Vagina (tissue), 2 donors: ENCODE measurements at regions of chr10 and their contacts with region 1.

Region 1: DNA sequence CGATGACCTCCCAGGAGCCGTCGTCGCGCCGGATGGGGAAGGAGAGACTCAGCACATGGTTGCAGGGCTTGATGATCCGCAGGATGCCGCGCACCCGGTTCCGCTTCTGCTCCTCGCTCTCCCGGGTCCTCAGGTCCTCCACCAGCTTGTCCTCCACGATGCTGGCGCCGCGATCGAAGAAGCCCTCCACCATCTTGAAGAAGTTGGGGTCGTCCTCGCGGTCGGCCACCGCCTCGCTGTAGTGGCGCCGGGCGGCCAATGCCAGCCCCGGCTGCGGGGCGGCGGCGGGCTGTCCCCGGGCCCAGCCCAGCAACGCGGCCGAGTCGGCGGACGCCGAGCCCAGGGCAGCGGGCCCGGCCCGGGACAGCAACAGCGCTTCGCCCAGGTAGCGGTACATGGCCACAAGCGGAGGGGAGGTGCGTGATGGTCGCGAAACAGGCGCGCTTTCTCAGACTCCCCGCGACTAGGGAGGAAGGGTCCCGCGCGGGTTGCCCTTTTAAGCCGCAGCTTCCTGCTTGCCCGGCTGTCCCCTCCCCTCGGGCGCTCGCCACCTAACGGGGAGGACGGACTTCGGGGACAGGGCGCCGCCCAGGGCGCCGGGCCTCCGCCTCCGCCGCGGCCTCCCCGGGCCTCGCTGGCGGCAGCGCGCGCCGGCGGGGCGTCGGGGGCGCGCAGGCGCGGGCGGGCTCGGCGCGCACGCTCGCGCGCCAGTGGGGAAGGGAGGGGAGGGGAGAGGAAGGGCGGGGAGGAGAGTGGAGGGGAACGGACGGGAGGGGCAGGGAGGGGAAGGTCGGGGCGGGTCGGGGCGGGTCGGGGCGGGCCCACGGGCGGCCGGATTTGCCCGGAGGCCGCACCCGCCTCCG is at the starts of genes GLUD1 and SHLD2:
- DNase-seq: peak in 1 of 2 donors; percentile 90
- H3K4me3 ChIP-seq: peak within 1 kb of the TSS; percentile 85 to 93
- H3K27ac ChIP-seq: peak within 1 kb of the TSS; percentile 98
- H3K4me1 ChIP-seq: peaks cover 41% of the 10 kb centered on the region
- H3K27me3 ChIP-seq: no peaks in the 10 kb centered on the region
- CTCF ChIP-seq: peak in 1 of 3 experiments; percentile 6
- POLR2A ChIP-seq: peak in 1 of 2 donors; percentile 86
- total RNA-seq, gene GLUD1: 133 TPM
- total RNA-seq, gene SHLD2: 27.5 TPM

Region 2: DNA sequence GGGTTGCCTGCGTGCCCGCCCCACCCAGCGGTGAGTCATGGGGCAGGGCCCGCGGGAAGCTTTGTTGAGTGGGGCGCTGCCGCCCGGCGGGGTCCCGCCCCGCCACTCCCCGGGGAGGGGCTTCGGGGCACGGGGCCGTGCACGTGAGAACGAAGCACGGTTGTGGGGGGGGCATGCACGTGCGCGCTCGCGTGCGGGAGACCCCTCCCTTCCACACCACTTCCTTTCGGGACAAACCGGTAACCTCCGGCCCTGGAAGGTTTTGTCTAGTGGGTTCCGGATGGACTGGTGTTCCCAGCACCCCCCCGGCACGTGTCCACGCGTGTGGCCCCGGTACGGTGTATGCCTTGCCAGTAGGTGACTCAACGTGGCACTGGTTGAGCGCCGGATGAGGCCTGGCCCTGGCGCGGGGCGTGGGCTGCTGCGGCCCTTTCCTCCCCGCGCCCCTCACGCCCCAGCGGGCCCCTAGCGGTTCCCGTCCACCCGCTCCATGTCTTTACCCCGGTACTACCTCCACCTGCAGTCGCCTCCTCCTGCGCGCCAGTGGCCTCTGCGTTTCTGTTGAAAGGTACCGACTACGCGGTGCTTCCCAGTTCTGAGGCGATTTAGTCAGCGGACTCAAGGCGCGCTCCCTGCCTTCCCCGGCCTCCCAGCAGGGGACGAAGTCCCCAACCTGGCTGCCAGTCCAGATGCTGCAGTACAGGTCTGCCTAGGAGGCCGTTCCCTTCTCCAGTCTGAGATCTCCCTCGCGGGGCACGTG is 123.2 kb before region 1 on chr10:
- intact Hi-C with region 1: loop called (anchors 5 kb)
- DNase-seq: peak; percentile 96 to 98
- H3K4me3 ChIP-seq: peak overlapping the region; percentile 76 to 92
- H3K27ac ChIP-seq: peak overlapping the region; percentile 99
- H3K4me1 ChIP-seq: peaks cover 56% of the 10 kb centered on the region
- H3K27me3 ChIP-seq: no peaks in the 10 kb centered on the region
- CTCF ChIP-seq: no peak
- POLR2A ChIP-seq: peak; percentile 3 to 84